ENCODE measurements at regions of chrX and their contacts with region 1.

Region 1: DNA sequence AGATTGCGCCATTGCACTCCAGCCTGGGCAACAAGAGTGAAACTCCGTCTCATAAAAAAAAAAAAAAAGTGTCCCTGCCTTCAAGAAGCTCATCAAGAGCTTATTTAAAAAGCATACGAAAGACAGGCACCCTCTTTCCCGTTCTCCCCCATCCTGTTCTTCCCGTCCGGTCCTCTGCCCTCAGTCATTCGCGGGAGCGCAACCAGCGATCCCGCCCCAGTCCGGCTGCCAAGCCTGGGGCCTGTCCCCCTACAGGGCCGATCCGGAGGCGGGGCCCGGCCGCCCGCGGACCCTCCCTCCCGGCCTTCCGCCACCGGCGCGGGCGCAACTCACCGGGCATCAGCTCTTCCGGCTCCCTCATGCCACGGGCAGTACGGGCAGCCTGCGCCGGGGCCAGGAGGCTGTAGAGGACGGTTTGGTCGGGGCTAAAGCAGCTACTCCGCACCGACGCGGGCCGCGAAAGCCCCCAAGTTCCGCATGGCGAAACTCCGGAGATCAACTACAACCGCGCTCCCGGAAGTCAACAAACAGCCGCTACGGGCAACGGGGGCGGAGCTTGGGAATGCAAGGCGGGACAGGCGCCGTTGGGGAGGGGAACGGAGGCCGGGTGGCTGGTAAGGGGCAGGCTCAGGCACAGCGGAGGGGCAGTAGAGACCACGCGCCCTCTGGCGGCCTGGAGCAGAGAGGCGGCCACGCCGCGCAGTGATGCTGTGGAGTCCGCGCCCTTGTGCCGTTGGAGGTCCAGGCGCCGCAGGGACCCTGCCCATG is at the start of gene RPGR:
- DNase-seq: peak; percentile 79
- ATAC-seq: peak; percentile 94
- H3K4me3 ChIP-seq: peak within 1 kb of the TSS; percentile 60 to 67
- H3K27ac ChIP-seq: peak within 1 kb of the TSS; percentile 69
- H3K4me1 ChIP-seq: peaks cover 0 to 10% of the 10 kb centered on the region in 2 experiments; a peak in 2 of 4 replicates
- H3K27me3 ChIP-seq: no peaks in the 10 kb centered on the region
- CTCF ChIP-seq: peak; percentile 61 to 71 (median 65)
- POLR2A ChIP-seq: no peak
- RAD21 ChIP-seq: peak; percentile 76
- total RNA-seq, gene RPGR: 10.4 TPM

Region 2: DNA sequence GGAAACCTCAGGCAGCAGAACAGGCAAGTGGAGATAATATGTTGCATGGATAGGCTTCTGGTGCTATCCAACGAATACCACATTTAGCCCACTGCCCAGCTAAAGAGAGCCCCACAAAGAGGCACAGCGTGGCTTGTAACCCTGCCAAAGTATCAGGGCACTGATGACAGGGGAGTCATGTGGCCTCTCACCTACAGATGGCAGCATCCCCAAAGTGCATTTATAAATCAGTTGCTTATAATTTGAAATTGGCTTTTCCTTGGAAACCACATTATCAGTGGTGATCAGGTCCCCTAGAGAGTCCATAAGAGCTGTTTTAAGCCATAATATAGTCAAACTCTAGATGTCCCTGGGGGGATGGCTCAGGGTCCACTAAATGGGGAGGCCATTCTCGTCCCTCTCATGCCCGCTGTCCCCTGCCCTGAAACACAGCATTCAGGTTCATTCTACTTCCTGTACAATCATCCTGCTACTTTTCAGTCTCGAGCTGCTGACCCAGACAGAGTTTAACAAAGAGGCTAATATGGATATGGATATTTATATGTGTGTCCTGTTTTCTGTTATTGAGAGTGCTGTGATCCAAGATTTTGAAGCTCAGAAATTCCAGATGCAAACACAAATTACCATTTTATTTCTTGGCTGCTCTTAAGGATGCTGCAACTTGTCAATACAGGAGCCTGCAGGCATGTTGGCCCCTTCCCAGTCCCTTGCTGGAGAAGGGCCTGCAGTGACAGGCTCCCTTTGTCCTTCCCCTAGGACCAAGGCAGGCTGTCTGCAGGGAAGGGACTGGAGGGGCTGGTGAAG is 135.0 kb before region 1 on chrX:
- CTCF ChIA-PET with region 1: interaction called, 13 read pairs
- POLR2A ChIA-PET with region 1: no interaction called
- RAD21 ChIA-PET with region 1: no interaction called
- intact Hi-C with region 1: loop called (anchors 1 kb)
- DNase-seq: no peak
- ATAC-seq: peak; percentile 67
- H3K4me3 ChIP-seq: no peak overlapping the region
- H3K27ac ChIP-seq: no peak overlapping the region
- H3K4me1 ChIP-seq: no peaks in the 10 kb centered on the region
- H3K27me3 ChIP-seq: no peaks in the 10 kb centered on the region
- CTCF ChIP-seq: peak; percentile 20 to 53 (median 50); a peak in 5 of 6 replicates
- POLR2A ChIP-seq: no peak
- RAD21 ChIP-seq: peak; percentile 59

Region 3: GRCh38 chrX:38220024-38220414 is 107.2 kb before region 1 on chrX:
- CTCF ChIA-PET with region 1: interaction called, 5 read pairs
- POLR2A ChIA-PET with region 1: no interaction called
- RAD21 ChIA-PET with region 1: no interaction called
- intact Hi-C with region 1: loop called (anchors 1 kb)
- DNase-seq: peak; percentile 41
- ATAC-seq: peak; percentile 81
- H3K4me3 ChIP-seq: peak overlapping the region; percentile 48 to 58
- H3K27ac ChIP-seq: peak overlapping the region; percentile 36
- H3K4me1 ChIP-seq: peaks cover 0 to 20% of the 10 kb centered on the region in 2 experiments; a peak in 2 of 4 replicates
- H3K27me3 ChIP-seq: no peaks in the 10 kb centered on the region
- CTCF ChIP-seq: 0 out of 6 replicates have a peak, but pooled peaks of 1 of the 3 experiments have one; percentile 10
- POLR2A ChIP-seq: no peak
- RAD21 ChIP-seq: peak; percentile 24

Region 4: GRCh38 chrX:38260231-38260630 is 67.0 kb before region 1 on chrX:
- CTCF ChIA-PET with region 1: interaction called, 4 read pairs
- POLR2A ChIA-PET with region 1: interaction called, 3 read pairs
- RAD21 ChIA-PET with region 1: no interaction called
- intact Hi-C with region 1: loop called (anchors 1 kb)
- DNase-seq: peak; percentile 23
- ATAC-seq: peak; percentile 87
- H3K4me3 ChIP-seq: no peak overlapping the region
- H3K27ac ChIP-seq: no peak overlapping the region
- H3K4me1 ChIP-seq: peaks cover 0 to 4% of the 10 kb centered on the region in 2 experiments; a peak in 2 of 4 replicates
- H3K27me3 ChIP-seq: no peaks in the 10 kb centered on the region
- CTCF ChIP-seq: peak; percentile 38 to 54 (median 52); a peak in 5 of 6 replicates
- POLR2A ChIP-seq: no peak
- RAD21 ChIP-seq: peak; percentile 46